Naive thymus-derived CD4-positive, alpha-beta T cell (primary cell): ENCODE measurements at regions of chr13 and their contacts with region 1.

Region 1: DNA sequence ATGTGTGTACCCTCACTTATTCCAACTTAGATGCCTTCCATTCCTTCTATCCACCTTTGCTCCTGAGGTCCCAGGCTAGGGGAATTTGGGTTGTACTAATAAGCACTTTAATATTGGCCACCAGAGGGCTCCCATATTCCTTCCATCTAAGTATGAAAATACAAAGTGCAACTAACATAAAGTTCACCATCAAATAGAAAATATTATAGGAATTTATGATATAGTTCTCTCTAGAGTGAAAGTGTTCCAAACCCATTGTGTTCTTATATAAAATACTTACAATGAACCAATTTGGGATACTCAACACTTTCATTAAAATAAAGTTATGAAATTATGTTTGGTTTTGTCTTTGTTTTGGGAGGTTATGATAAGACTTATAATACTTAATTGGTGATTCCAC is 62.3 kb downstream of the ITGBL1 start:
- DNase-seq: peak in 6 of 9 donors; percentile 2 to 32 (median 14)
- ATAC-seq: no peak
- H3K4me3 ChIP-seq: no peak overlapping the region
- H3K4me3 Mint-ChIP-seq: no peak overlapping the region
- H3K27ac ChIP-seq: no peak overlapping the region
- H3K27ac Mint-ChIP-seq: no peak overlapping the region
- H3K4me1 ChIP-seq: no peaks in the 10 kb centered on the region
- H3K4me1 Mint-ChIP-seq: peaks cover 0 to 5% (median 0%) of the 10 kb centered on the region in 7 donors
- H3K27me3 ChIP-seq: no peaks in the 10 kb centered on the region
- H3K27me3 Mint-ChIP-seq: peaks cover 0 to 19% (median 3%) of the 10 kb centered on the region in 5 donors

Region 2: GRCh38 chr13:101127741-101128353 is 386.9 kb before region 1 on chr13:
- CTCF ChIA-PET with region 1: no interaction called
- POLR2A ChIA-PET with region 1: no interaction called
- intact Hi-C with region 1: no loop called
- DNase-seq: peak in 5 of 9 donors; percentile 16 to 36 (median 29)
- ATAC-seq: peak; percentile 80
- H3K4me3 ChIP-seq: no peak overlapping the region
- H3K4me3 Mint-ChIP-seq: no peak overlapping the region
- H3K27ac ChIP-seq: no peak overlapping the region
- H3K27ac Mint-ChIP-seq: no peak overlapping the region
- H3K4me1 ChIP-seq: no peaks in the 10 kb centered on the region
- H3K4me1 Mint-ChIP-seq: peaks cover 0 to 5% (median 0%) of the 10 kb centered on the region in 7 donors
- H3K27me3 ChIP-seq: peaks cover 0 to 2% of the 10 kb centered on the region in 2 donors
- H3K27me3 Mint-ChIP-seq: peaks cover 0 to 20% (median 15%) of the 10 kb centered on the region in 5 donors

Region 3: GRCh38 chr13:101492251-101492910 is 22.4 kb before region 1 on chr13:
- CTCF ChIA-PET with region 1: no interaction called
- POLR2A ChIA-PET with region 1: no interaction called
- intact Hi-C with region 1: no loop called
- DNase-seq: no peak
- ATAC-seq: no peak
- H3K4me3 ChIP-seq: no peak overlapping the region
- H3K4me3 Mint-ChIP-seq: no peak overlapping the region
- H3K27ac ChIP-seq: no peak overlapping the region
- H3K27ac Mint-ChIP-seq: no peak overlapping the region
- H3K4me1 ChIP-seq: no peaks in the 10 kb centered on the region
- H3K4me1 Mint-ChIP-seq: no peaks in the 10 kb centered on the region
- H3K27me3 ChIP-seq: no peaks in the 10 kb centered on the region
- H3K27me3 Mint-ChIP-seq: peaks cover 0 to 37% (median 5%) of the 10 kb centered on the region in 5 donors

Region 4: GRCh38 chr13:101626925-101627555 is 112.3 kb after region 1 on chr13:
- CTCF ChIA-PET with region 1: no interaction called
- POLR2A ChIA-PET with region 1: no interaction called
- intact Hi-C with region 1: loop called (anchors 2 to 10 kb)
- DNase-seq: peak in 6 of 9 donors; percentile 24 to 62 (median 48)
- ATAC-seq: peak; percentile 73
- H3K4me3 ChIP-seq: peak overlapping the region; percentile 40
- H3K4me3 Mint-ChIP-seq: peak overlapping the region; percentile 63 to 92 (median 78)
- H3K27ac ChIP-seq: peak overlapping the region; percentile 67
- H3K27ac Mint-ChIP-seq: peak overlapping the region; percentile 15 to 89 (median 76)
- H3K4me1 ChIP-seq: peaks cover 29 to 33% of the 10 kb centered on the region in 2 donors
- H3K4me1 Mint-ChIP-seq: peaks cover 9 to 49% (median 48%) of the 10 kb centered on the region in 7 donors
- H3K27me3 ChIP-seq: no peaks in the 10 kb centered on the region
- H3K27me3 Mint-ChIP-seq: peaks cover 0 to 27% (median 0%) of the 10 kb centered on the region in 5 donors

Region 5: GRCh38 chr13:101757446-101758039 is 242.8 kb after region 1 on chr13:
- CTCF ChIA-PET with region 1: interaction called, 5 read pairs
- POLR2A ChIA-PET with region 1: no interaction called
- intact Hi-C with region 1: loop called (anchors 1 kb)
- DNase-seq: peak in 6 of 9 donors; percentile 2 to 39 (median 12)
- ATAC-seq: peak; percentile 49
- H3K4me3 ChIP-seq: no peak overlapping the region
- H3K4me3 Mint-ChIP-seq: no peak overlapping the region
- H3K27ac ChIP-seq: no peak overlapping the region
- H3K27ac Mint-ChIP-seq: no peak overlapping the region
- H3K4me1 ChIP-seq: no peaks in the 10 kb centered on the region
- H3K4me1 Mint-ChIP-seq: no peaks in the 10 kb centered on the region
- H3K27me3 ChIP-seq: no peaks in the 10 kb centered on the region
- H3K27me3 Mint-ChIP-seq: peaks cover 2 to 31% (median 20%) of the 10 kb centered on the region in 5 donors

Region 6: DNA sequence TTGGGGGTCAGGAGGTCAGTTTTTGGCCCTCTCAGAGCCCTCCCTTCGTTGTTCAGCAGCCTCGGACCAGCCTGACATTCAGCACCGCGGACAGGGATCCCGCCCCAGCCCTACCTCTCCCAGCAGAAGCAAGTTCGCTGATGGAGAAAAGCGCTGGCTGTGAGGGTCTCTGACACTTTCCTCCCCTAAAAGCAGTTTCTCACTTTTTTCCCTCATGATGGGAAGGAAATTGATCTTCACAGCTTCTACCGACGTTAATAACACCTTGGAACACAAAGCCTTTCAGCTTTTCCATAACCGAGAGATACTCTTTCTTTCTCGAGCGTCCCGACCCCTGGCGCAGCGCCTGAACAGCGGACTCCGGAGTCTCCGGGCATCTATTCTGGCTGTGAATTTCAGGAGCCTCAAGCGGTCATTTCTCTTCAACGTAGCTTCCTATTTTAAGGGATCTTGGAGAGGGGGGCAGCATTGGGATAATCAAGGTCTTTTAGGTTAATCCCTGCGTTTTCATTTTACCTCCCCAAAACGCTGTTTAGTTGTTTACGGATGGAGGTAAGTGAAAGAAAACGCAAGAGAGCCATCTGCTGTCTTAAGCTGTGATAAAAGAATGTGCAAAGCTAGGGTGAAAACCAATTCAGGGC is 404.9 kb after region 1 on chr13:
- CTCF ChIA-PET with region 1: interaction called, 3 read pairs
- POLR2A ChIA-PET with region 1: no interaction called
- intact Hi-C with region 1: loop called in 1 of 2 experiments (anchors 10 kb)
- DNase-seq: no peak
- ATAC-seq: no peak
- H3K4me3 ChIP-seq: no peak overlapping the region
- H3K4me3 Mint-ChIP-seq: no peak overlapping the region
- H3K27ac ChIP-seq: no peak overlapping the region
- H3K27ac Mint-ChIP-seq: no peak overlapping the region
- H3K4me1 ChIP-seq: no peaks in the 10 kb centered on the region
- H3K4me1 Mint-ChIP-seq: peaks cover 0 to 2% (median 0%) of the 10 kb centered on the region in 7 donors
- H3K27me3 ChIP-seq: peaks cover 0 to 8% of the 10 kb centered on the region in 2 donors
- H3K27me3 Mint-ChIP-seq: peaks cover 44 to 65% (median 57%) of the 10 kb centered on the region in 5 donors

Region 7: GRCh38 chr13:102555917-102556553 is 1041.2 kb after region 1 on chr13:
- CTCF ChIA-PET with region 1: interaction called, 9 read pairs
- POLR2A ChIA-PET with region 1: no interaction called
- intact Hi-C with region 1: loop called in 1 of 2 experiments (anchors 1 kb)
- DNase-seq: peak in 5 of 9 donors; percentile 19 to 35 (median 28)
- ATAC-seq: no peak
- H3K4me3 ChIP-seq: no peak overlapping the region
- H3K4me3 Mint-ChIP-seq: no peak overlapping the region
- H3K27ac ChIP-seq: no peak overlapping the region
- H3K27ac Mint-ChIP-seq: no peak overlapping the region
- H3K4me1 ChIP-seq: no peaks in the 10 kb centered on the region
- H3K4me1 Mint-ChIP-seq: peaks cover 0 to 5% (median 0%) of the 10 kb centered on the region in 7 donors
- H3K27me3 ChIP-seq: no peaks in the 10 kb centered on the region
- H3K27me3 Mint-ChIP-seq: peaks cover 0 to 11% (median 7%) of the 10 kb centered on the region in 5 donors